IMR-90 (cell line): ENCODE measurements at regions of chr1 and their contacts with region 1.

Region 1: GRCh38 chr1:85554630-85555327 is 25.8 kb upstream of the CCN1 start:
- DNase-seq: peak; percentile 70
- ATAC-seq: peak; percentile 19
- H3K4me3 ChIP-seq: no peak overlapping the region
- H3K27ac ChIP-seq: peak overlapping the region; percentile 62; the same call in 1 of the 2 replicates
- H3K4me1 ChIP-seq: peaks cover 29% of the 10 kb centered on the region
- H3K27me3 ChIP-seq: no peaks in the 10 kb centered on the region
- CTCF ChIP-seq: no peak
- POLR2A ChIP-seq: no peak
- RAD21 ChIP-seq: no peak

Region 2: DNA sequence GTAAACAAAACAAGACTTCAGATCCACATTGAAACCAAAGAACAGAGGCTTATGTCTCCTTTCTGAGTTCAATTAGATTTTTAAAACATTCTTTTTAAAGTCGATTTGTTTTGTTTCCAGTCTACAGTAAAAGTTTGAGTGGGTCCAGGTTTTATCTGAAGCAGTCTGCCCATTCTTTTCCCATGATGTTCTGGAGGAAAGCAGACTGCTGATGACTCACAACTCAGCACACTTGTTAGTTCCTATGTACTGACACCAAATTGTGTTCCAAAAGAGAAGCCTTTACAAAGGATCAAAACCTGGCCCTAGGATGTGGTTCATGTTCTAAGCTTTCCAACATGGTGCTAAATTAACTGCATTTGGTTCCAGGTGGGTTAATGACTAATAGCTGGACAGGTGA is 14.3 kb after region 1 on chr1:
- CTCF ChIA-PET with region 1: interaction called, 5 read pairs
- POLR2A ChIA-PET with region 1: no interaction called
- dilution Hi-C with region 1: no loop called
- in situ Hi-C with region 1: no loop called
- intact Hi-C with region 1: loop called (anchors 2 kb)
- DNase-seq: peak; percentile 90
- ATAC-seq: peak; percentile 66
- H3K4me3 ChIP-seq: no peak overlapping the region
- H3K27ac ChIP-seq: peak overlapping the region; percentile 81; the same call in 1 of the 2 replicates
- H3K4me1 ChIP-seq: peaks cover 34% of the 10 kb centered on the region
- H3K27me3 ChIP-seq: no peaks in the 10 kb centered on the region
- CTCF ChIP-seq: no peak
- POLR2A ChIP-seq: no peak
- RAD21 ChIP-seq: no peak

Region 3: GRCh38 chr1:85734931-85735330 is 180.2 kb after region 1 on chr1:
- CTCF ChIA-PET with region 1: no interaction called
- POLR2A ChIA-PET with region 1: no interaction called
- dilution Hi-C with region 1: no loop called
- in situ Hi-C with region 1: no loop called
- intact Hi-C with region 1: no loop called
- DNase-seq: no peak
- ATAC-seq: no peak
- H3K4me3 ChIP-seq: no peak overlapping the region
- H3K27ac ChIP-seq: no peak overlapping the region
- H3K4me1 ChIP-seq: no peaks in the 10 kb centered on the region
- H3K27me3 ChIP-seq: no peaks in the 10 kb centered on the region
- CTCF ChIP-seq: no peak
- POLR2A ChIP-seq: no peak
- RAD21 ChIP-seq: no peak